H1 (cell line): ENCODE measurements at regions of chr1 and their contacts with region 1.

Region 1: GRCh38 chr1:41322835-41323627 is 38.2 kb upstream of the FOXO6 start:
- DNase-seq: peak; percentile 36 to 80
- H3K4me3 ChIP-seq: no peak overlapping the region
- H3K27ac ChIP-seq: no peak overlapping the region
- H3K4me1 ChIP-seq: peaks cover 0 to 10% (median 6%) of the 10 kb centered on the region in 4 experiments; a peak in 6 of 7 replicates
- H3K27me3 ChIP-seq: no peaks in the 10 kb centered on the region; a peak in 1 of 7 replicates
- CTCF ChIP-seq: peak; percentile 87 to 93 (median 89)
- EP300 ChIP-seq: no peak
- POLR2A ChIP-seq: no peak
- RAD21 ChIP-seq: peak; percentile 94 to 96

Region 2: DNA sequence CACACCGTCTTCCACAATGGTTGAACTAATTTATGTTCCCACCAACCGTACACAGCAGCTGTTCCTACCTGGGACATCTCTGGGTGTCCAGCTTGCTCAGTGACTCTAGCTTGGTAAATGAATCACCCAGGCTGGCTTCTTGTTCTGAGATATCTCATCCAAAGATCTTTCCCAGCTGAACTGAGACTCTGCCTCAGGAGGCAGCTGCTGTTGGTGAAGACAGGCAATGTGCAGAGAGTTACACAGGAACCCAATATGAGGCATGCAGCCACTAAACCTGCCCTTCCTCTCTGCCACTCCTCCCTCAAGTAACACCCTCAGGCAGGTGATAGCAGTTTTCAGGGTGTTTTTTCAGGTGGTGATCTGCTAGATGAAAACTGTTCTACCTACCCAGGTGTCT is 24.2 kb after region 1 on chr1:
- CTCF ChIA-PET with region 1: interaction called, 64 read pairs
- POLR2A ChIA-PET with region 1: no interaction called
- DNase-seq: peak in 1 of 2 experiments; percentile 10
- H3K4me3 ChIP-seq: no peak overlapping the region
- H3K27ac ChIP-seq: no peak overlapping the region
- H3K4me1 ChIP-seq: peaks cover 0 to 1% (median 0%) of the 10 kb centered on the region in 4 experiments; a peak in 2 of 7 replicates
- H3K27me3 ChIP-seq: peaks cover 0 to 2% (median 0%) of the 10 kb centered on the region in 4 experiments; a peak in 2 of 7 replicates
- CTCF ChIP-seq: no peak
- EP300 ChIP-seq: no peak
- POLR2A ChIP-seq: no peak
- RAD21 ChIP-seq: no peak

Region 3: GRCh38 chr1:41498809-41499208 is 175.8 kb after region 1 on chr1:
- CTCF ChIA-PET with region 1: no interaction called
- POLR2A ChIA-PET with region 1: no interaction called
- DNase-seq: no peak
- H3K4me3 ChIP-seq: no peak overlapping the region
- H3K27ac ChIP-seq: no peak overlapping the region
- H3K4me1 ChIP-seq: peaks cover 0 to 23% (median 17%) of the 10 kb centered on the region in 4 experiments; a peak in 6 of 7 replicates
- H3K27me3 ChIP-seq: peaks cover 0 to 13% (median 11%) of the 10 kb centered on the region in 4 experiments; a peak in 3 of 7 replicates
- CTCF ChIP-seq: no peak
- EP300 ChIP-seq: no peak
- POLR2A ChIP-seq: no peak
- RAD21 ChIP-seq: no peak